PC-9 (cell line): ENCODE measurements at regions of chr2 and their contacts with region 1.

Region 1: GRCh38 chr2:39419282-39420223 is 17.5 kb downstream of the MAP4K3 start:
- DNase-seq: no peak
- H3K4me3 ChIP-seq: no peak overlapping the region
- H3K27ac ChIP-seq: no peak overlapping the region
- H3K4me1 ChIP-seq: no peaks in the 10 kb centered on the region
- H3K27me3 ChIP-seq: no peaks in the 10 kb centered on the region
- CTCF ChIP-seq: no peak

Region 2: GRCh38 chr2:39455826-39456225 is 36.3 kb after region 1 on chr2:
- CTCF ChIA-PET with region 1: interaction called, 18 read pairs
- POLR2A ChIA-PET with region 1: no interaction called
- intact Hi-C with region 1: no loop called
- DNase-seq: no peak
- H3K4me3 ChIP-seq: no peak overlapping the region
- H3K27ac ChIP-seq: no peak overlapping the region
- H3K4me1 ChIP-seq: no peaks in the 10 kb centered on the region
- H3K27me3 ChIP-seq: no peaks in the 10 kb centered on the region
- CTCF ChIP-seq: no peak